Caco-2 (cell line): ENCODE measurements at regions of chr10 and their contacts with region 1.

Region 1: DNA sequence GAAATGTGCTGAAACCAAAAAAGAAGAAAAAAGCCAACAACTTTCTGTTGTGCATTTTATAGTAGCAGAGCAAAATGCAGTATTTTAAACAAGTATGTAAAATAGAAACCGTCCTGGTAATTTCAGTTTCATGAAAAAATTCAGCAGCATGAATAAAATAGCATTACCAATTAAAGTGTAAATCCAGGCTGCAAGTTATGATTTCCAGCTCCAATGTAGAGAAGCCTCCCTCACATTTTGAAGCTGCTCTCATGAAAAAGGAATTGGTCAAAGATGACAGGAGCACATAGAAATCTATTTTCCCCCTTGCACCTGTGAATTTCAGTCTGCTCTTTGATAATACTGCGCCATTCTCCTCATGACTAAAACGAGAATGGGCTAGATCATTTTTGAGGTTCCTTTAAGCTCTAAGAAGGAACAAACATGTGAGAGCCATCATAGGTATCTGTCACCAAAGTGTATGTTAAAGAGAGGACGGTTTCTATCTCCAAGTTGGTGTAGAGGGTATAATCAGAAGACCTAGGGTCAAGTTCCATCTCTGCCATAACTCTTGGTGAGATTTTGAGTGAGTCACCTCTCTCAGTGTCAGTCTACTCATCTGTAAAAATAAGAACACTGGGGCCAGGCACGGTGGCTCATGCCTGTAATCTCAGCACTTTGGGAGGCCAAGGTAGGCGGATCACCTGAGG is 107.5 kb downstream of the MTPAP start:
- DNase-seq: no peak
- H3K4me3 ChIP-seq: no peak overlapping the region
- H3K4me3 Mint-ChIP-seq: no peak overlapping the region
- H3K27ac Mint-ChIP-seq: no peak overlapping the region
- H3K4me1 ChIP-seq: no peaks in the 10 kb centered on the region; the same call in 1 of the 2 replicates
- H3K4me1 Mint-ChIP-seq: no peaks in the 10 kb centered on the region
- H3K27me3 ChIP-seq: no peaks in the 10 kb centered on the region
- H3K27me3 Mint-ChIP-seq: no peaks in the 10 kb centered on the region
- CTCF ChIP-seq: no peak

Region 2: GRCh38 chr10:30027057-30028005 is 214.2 kb before region 1 on chr10:
- CTCF ChIA-PET with region 1: interaction called, 7 read pairs
- POLR2A ChIA-PET with region 1: no interaction called
- intact Hi-C with region 1: loop called (anchors 1 kb)
- DNase-seq: peak in 1 of 2 experiments; percentile 43
- H3K4me3 ChIP-seq: no peak overlapping the region
- H3K4me3 Mint-ChIP-seq: no peak overlapping the region
- H3K27ac Mint-ChIP-seq: peak overlapping the region; percentile 39
- H3K4me1 ChIP-seq: 0 out of 2 replicates have a peak, but pooled peaks cover 3% of the 10 kb centered on the region
- H3K4me1 Mint-ChIP-seq: no peaks in the 10 kb centered on the region
- H3K27me3 ChIP-seq: no peaks in the 10 kb centered on the region
- H3K27me3 Mint-ChIP-seq: no peaks in the 10 kb centered on the region
- CTCF ChIP-seq: no peak

Region 3: DNA sequence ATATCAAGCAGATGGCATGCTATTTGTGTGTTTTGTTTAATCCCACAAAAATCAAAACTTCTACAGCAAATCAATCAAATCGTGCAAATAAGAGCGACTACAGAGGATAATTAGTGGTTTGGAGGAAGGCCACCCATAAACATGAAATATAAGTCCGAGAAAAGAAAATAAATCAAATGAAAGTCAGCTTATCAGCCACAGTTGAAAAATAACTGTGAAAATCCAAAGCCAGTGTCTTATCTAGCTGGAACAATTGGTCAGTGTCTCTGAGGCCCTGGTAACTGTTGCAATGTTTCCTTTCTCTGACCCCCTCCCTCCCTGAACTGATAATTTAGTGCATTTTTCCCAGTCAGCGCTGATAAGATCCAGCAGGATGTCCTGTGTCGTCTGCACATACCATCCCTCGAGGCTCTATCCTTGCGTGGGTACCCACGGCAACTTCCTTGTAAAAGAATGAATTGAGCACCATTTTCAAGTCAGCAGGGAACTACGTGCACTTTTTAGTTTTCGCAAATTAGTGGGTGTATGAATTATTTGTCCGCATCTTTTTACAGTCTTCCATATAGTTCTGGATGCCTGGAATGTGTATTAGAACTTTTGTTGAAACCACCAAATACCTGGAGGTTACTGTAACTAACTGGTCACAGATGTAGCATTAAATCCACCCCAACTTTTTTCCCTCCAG is 171.4 kb before region 1 on chr10:
- CTCF ChIA-PET with region 1: no interaction called
- POLR2A ChIA-PET with region 1: no interaction called
- intact Hi-C with region 1: loop called (anchors 1 kb)
- DNase-seq: peak; percentile 75 to 78
- H3K4me3 ChIP-seq: no peak overlapping the region
- H3K4me3 Mint-ChIP-seq: peak overlapping the region; percentile 15
- H3K27ac Mint-ChIP-seq: peak overlapping the region; percentile 8
- H3K4me1 ChIP-seq: peaks cover 17% of the 10 kb centered on the region
- H3K4me1 Mint-ChIP-seq: peaks cover 19% of the 10 kb centered on the region
- H3K27me3 ChIP-seq: no peaks in the 10 kb centered on the region
- H3K27me3 Mint-ChIP-seq: no peaks in the 10 kb centered on the region
- CTCF ChIP-seq: no peak

Region 4: DNA sequence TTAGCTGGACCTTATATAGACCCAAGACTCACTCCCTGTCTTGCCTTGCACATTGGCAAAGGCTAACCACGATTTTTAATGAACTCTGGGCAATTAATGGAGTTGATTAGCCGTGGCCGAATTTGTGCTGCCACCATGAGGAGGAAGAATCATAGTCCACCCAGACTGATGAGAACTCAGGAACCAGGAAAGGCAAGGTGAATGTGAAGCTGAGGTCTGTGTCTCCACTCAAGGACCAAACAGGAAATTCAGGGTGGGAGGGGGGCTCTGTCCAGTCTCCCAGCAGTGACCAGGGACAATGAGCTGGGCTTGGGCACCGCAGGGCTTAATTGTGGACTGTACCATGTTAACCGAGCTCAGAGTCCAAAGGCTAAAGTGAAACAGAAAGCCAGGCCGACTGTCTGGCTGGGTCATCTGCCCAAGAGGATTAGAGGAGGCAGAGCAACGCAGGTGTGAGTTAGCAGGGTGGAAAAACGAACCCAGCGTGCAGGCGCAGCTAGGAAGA is 55.1 kb before region 1 on chr10:
- CTCF ChIA-PET with region 1: interaction called, 3 read pairs
- POLR2A ChIA-PET with region 1: interaction called, 3 read pairs
- intact Hi-C with region 1: loop called (anchors 5 kb)
- DNase-seq: peak; percentile 29 to 54
- H3K4me3 ChIP-seq: no peak overlapping the region
- H3K4me3 Mint-ChIP-seq: no peak overlapping the region
- H3K27ac Mint-ChIP-seq: peak overlapping the region; percentile 60
- H3K4me1 ChIP-seq: peaks cover 66% of the 10 kb centered on the region
- H3K4me1 Mint-ChIP-seq: peaks cover 61% of the 10 kb centered on the region
- H3K27me3 ChIP-seq: no peaks in the 10 kb centered on the region
- H3K27me3 Mint-ChIP-seq: no peaks in the 10 kb centered on the region
- CTCF ChIP-seq: no peak